Right ventricle myocardium inferior (tissue), 1 donor: ENCODE measurements at regions of chr3 and their contacts with region 1.

Region 1: GRCh38 chr3:182258538-182259177 is 534.6 kb upstream of the ATP11B start:
- DNase-seq: no peak
- ATAC-seq: no peak

Region 2: DNA sequence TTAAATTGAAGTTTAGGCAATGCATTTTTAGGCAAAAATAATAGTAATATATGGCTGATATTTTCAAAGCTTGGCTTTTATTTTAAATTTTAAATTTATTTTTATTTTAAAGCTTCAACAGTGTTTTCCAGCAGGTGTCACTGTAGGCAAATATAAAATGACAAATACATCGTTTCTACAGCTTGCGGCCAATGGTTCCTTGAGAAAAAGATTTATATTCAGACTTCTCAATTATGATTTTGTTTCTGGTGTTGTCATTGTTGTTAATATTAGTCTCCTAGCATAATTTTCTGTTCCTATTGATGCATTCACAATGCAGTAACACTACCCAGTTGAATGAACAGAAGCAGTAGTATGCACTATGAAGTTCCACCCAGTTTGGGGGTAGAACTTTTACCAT is 1048.4 kb before region 1 on chr3:
- intact Hi-C with region 1: loop called (anchors 10 kb)
- DNase-seq: no peak
- ATAC-seq: no peak

Region 3: DNA sequence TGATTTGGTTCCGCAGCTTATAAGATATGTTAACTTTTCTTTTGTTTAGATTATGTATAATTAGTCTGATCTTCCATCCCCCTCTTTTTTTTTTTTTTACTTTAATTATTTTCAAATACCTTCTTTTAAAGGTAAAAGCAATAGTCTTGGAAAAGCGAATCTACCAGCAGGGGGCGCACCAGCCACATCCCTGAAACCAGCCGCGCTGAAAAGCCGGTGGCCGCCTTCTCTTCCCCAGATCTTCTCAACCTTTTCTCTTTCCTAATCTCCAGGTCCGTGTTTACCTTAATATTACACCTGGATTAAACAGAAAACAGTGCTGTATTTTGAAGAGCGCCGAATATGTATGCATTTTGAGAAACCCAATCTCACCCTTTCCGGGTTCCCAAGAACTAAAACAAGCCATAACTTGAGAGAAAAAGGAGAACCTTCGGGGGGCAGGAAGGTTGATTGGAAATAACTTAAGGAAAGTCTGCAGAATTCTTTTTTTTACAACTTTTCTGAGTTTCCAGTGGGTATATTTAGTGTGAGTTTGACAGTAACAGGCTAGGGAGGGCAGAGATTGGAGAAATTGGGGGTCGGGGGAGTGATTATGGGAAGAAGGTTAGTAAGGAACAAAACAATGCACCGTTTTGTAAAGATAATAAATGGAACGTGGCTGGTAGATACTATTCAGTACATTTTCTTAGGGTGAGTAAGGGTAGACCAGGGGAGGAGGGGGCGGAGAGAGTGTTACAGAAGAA is 549.0 kb before region 1 on chr3:
- intact Hi-C with region 1: loop called (anchors 5 kb)
- DNase-seq: no peak
- ATAC-seq: no peak

Region 4: GRCh38 chr3:182238126-182238525 is 20.5 kb before region 1 on chr3:
- intact Hi-C with region 1: no loop called
- DNase-seq: peak; percentile 69
- ATAC-seq: no peak